ENCODE measurements at regions of chr9 and their contacts with region 1.

Region 1: DNA sequence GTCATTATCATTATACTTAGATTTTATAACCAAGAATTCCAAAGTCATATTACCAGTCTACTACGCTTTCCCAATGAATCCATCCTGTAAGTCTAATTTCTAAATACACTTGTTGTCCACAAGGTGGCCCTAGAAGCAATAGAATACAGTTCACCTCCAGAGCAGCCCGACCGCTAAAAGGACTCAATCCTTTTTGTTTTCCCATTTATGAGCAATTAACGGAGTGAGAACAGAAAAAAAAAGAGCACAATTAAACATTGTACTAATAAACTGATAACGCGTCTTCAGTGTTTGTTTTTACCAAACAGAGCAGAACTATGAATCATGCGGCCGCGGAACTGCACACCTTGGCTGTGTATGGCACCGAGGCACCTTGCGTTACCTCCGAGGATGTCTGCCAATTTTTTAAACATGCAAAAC is 160.7 kb upstream of the DAPK1 start:
- DNase-seq: peak; percentile 19 to 64 (median 38)
- H3K4me3 ChIP-seq: peak overlapping the region in 2 of 4 donors; percentile 23 to 46
- H3K27ac ChIP-seq: no peak overlapping the region
- H3K4me1 ChIP-seq: peaks cover 7 to 10% of the 10 kb centered on the region in 2 donors
- H3K27me3 ChIP-seq: no peaks in the 10 kb centered on the region
- CTCF ChIP-seq: peak; percentile 65 to 84 (median 78)
- POLR2A ChIP-seq: no peak

Region 2: DNA sequence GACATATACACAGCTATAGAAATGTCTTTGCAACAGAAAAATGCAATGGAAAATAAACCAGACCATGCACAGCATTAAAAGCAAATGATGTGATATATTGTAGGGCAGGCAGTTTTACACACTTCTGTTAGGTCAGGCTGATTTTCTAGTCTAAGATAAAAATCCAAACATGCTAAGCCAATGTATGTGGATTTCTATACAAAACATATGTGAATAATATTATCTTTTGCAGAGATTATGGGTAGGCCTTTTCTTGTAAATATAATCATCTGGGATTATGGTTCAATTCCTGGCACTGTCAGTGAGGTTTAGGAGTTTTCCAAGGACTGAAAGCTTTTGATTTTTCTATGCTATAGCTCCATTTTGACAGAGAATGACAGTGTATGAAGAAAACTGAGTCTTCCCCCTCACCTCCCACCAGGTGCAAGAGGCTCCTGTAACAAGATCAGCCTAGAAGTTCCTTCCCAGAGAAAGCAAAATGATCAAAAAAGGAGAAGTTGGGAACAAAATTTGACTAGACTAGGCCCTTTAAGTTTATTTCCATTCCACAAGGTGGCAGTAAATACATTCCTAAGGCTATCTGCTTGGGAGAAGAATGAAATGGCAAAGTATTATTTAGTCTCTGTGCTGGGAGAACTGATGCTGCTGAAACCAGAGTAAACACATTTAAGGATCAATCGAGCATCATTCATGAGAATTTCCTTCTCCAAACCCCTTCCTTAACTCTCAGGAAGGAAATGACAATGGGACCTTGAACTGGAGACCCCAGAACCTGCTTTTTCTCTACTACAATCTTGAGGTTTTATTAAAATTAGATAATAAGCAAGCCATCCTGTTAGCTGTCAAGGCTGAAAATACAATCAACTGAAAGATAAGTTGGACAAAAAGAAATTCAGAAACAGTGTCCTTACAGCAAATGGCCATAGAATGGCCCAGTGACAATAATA is 849.8 kb before region 1 on chr9:
- intact Hi-C with region 1: loop called in 1 of 2 experiments (anchors 10 kb)
- DNase-seq: no peak
- H3K4me3 ChIP-seq: no peak overlapping the region
- H3K27ac ChIP-seq: no peak overlapping the region
- H3K4me1 ChIP-seq: no peaks in the 10 kb centered on the region
- H3K27me3 ChIP-seq: no peaks in the 10 kb centered on the region
- CTCF ChIP-seq: peak; percentile 49 to 74 (median 66)
- POLR2A ChIP-seq: no peak

Region 3: DNA sequence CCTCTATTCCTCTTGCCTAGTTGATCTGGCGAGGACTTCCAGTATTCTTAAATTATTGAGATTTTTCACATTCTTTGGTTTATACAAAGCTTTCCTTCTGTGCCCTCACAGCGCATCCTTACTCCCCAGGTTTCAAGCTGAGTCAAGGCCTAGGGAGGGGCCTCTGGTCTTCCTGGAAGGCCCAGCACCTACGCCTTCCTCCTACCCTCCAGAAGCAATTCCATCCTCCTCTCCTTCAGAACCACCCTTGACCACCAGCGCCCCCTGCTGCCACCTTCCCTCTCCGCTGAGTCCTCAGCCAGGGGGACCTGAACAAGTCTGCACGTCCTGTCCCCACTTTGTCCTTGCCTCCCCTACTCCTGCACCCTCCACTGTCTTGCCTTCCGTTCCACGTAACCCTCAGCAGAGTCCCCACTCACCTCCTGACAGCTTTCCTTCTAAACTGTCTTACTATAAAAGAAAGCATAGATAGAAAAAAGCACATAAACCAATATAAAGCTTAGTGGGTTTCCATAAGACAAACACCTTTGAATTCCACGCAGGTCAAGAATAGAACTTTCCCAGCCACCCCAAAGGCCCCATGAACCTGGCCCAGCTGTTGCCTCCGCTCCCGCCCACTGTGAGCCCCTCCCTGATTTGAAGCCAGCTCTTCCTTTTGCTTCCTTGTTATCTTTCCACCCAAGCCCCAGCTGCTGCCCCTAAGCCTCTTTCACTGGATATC is 326.0 kb after region 1 on chr9:
- intact Hi-C with region 1: loop called (anchors 2 to 5 kb)
- DNase-seq: peak; percentile 61 to 84 (median 78)
- H3K4me3 ChIP-seq: no peak overlapping the region
- H3K27ac ChIP-seq: no peak overlapping the region
- H3K4me1 ChIP-seq: no peaks in the 10 kb centered on the region
- H3K27me3 ChIP-seq: no peaks in the 10 kb centered on the region
- CTCF ChIP-seq: peak; percentile 65 to 85 (median 78)
- POLR2A ChIP-seq: no peak

Region 4: DNA sequence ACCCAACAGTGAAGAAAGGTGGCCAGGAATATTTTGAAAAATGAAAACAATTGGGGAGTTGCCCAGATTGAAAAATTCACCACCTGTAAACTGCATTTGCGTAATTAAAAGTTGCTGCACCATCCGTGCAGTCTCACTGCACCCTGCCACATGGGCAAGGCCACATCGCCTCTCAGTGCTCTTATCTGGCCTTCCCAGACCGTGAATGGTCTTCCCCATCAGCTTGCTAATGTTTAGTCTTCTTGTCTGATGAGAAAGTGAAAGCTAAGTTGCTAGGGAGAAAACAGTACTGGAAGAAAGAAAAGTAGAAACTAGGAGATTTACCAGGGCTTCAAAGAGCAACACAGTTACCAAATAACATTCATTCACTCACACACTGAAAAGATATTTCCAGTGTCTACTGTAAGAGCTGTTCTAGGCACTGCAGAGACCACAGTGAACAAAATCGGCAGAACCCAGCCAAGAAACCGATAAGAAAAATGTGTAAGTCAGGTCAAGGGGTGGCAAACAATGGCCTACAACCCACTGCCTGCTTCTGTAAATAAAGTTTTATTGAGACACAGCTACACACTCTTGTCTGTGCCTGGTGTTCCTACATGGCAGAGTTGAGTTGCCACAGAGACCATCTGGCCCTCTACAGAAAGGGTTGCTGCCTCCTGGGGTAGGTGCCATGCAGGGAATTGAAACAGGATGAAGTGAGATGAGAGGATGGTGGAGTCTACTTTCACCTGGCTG is 337.8 kb after region 1 on chr9:
- intact Hi-C with region 1: loop called in 1 of 2 experiments (anchors 5 kb)
- DNase-seq: no peak
- H3K4me3 ChIP-seq: no peak overlapping the region
- H3K27ac ChIP-seq: no peak overlapping the region
- H3K4me1 ChIP-seq: no peaks in the 10 kb centered on the region
- H3K27me3 ChIP-seq: no peaks in the 10 kb centered on the region
- CTCF ChIP-seq: no peak
- POLR2A ChIP-seq: no peak

Measured in adrenal gland (tissue), 19 donors.